ENCODE measurements at regions of chr5 and their contacts with region 1.

Region 1: DNA sequence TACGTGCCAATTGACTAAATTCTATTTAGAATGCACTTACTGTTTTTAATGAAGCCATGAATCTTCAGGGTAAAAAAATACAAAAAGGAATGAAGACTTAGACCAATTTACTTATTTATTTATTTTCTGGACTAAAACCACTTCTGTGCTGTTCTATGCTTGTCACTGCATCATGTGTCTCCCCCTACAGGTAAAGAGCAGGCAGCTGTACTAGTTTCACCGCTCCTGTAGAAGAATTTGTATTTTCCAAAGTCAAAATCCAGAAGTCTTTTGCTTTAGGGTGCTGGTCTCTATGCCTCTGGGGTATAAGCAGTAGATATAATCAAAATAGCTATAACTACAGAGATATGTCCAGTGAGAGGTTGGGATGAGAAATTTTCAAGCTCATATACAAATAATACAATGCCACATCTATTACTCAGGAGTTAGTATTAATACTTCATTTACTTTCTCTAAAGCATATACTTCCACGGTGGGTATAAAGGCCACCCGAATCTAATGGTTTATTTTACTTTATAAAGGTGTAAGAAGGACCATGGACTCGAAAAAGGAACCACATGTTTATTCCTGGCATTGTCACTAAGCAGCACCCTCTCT is 591.5 kb downstream of the RAB3C start:
- DNase-seq: peak; percentile 68 to 79 (median 77)
- H3K4me3 ChIP-seq: no peak overlapping the region
- H3K27ac ChIP-seq: no peak overlapping the region
- H3K4me1 ChIP-seq: peaks cover 0 to 16% (median 6%) of the 10 kb centered on the region in 4 experiments
- H3K27me3 ChIP-seq: no peaks in the 10 kb centered on the region

Region 2: DNA sequence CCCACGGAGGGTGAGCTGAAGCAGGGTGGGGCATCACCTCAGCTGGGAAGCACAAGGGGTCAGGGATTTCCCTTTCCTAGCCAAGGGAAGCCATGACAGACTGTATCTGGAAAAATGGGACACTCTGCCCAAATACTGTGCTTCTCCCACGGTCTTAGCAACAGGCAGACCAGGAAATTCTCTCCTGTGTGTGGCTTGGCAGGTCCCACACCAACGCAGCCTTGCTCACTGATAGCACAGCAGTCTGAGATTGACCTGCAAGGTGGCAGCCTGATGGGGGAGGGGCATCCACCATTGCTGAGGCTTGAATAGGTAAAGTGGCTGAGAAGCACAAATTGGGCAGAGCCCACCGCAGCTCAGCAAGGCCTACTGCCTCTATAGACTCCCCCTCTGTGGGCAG is 568.3 kb before region 1 on chr5:
- CTCF ChIA-PET with region 1: no interaction called
- POLR2A ChIA-PET with region 1: no interaction called
- DNase-seq: no peak
- H3K4me3 ChIP-seq: no peak overlapping the region
- H3K27ac ChIP-seq: no peak overlapping the region
- H3K4me1 ChIP-seq: no peaks in the 10 kb centered on the region
- H3K27me3 ChIP-seq: no peaks in the 10 kb centered on the region

Region 3: GRCh38 chr5:59039296-59040023 is 134.9 kb before region 1 on chr5:
- CTCF ChIA-PET with region 1: interaction called, 55 read pairs
- POLR2A ChIA-PET with region 1: no interaction called
- DNase-seq: peak; percentile 93 to 97 (median 96)
- H3K4me3 ChIP-seq: peak overlapping the region; percentile 80 to 98 (median 94)
- H3K27ac ChIP-seq: peak overlapping the region; percentile 85 to 90
- H3K4me1 ChIP-seq: peaks cover 35 to 70% (median 52%) of the 10 kb centered on the region in 4 experiments
- H3K27me3 ChIP-seq: no peaks in the 10 kb centered on the region

Region 4: DNA sequence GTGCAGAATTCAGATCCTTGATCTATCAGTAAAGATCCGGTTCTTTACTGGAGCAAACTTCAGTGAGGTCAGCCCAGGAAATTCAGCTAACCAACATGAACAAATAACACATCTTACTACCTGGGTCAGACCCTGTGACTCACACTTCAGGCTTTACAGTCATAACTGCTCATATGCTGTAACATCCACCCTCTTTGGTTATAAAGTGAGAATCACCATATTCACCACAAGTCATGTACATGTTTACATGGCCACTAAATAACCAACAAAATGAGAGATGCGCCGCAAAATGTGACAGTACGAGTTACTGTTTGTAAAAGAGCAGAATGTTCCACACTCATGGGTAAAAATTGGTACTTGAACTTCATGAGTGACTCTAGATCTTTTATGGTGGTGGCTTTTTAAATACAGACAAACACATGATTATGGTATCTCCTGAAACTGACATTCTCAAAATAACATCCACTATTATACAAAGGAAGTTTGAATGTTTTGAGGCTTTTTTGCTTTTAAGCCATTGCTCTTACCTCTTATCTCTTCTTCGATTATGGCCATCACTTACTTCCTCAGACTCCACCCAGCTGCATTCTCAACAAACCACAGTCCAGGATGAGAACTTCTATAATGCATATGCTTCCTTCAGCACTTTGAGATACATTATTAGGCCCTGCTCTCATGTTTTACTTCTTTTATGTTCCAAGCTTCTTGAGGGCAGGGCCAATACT is 74.9 kb before region 1 on chr5:
- CTCF ChIA-PET with region 1: no interaction called
- POLR2A ChIA-PET with region 1: no interaction called
- DNase-seq: peak in 2 of 3 donors; percentile 14 to 18
- H3K4me3 ChIP-seq: no peak overlapping the region
- H3K27ac ChIP-seq: no peak overlapping the region
- H3K4me1 ChIP-seq: peaks cover 0 to 6% (median 5%) of the 10 kb centered on the region in 4 experiments
- H3K27me3 ChIP-seq: no peaks in the 10 kb centered on the region

Region 5: GRCh38 chr5:59126708-59127573 is 47.4 kb before region 1 on chr5:
- CTCF ChIA-PET with region 1: interaction called, 11 read pairs
- POLR2A ChIA-PET with region 1: no interaction called
- DNase-seq: no peak
- H3K4me3 ChIP-seq: peak overlapping the region in 6 of 7 experiments; percentile 29 to 81 (median 62)
- H3K27ac ChIP-seq: peak overlapping the region; percentile 65 to 81
- H3K4me1 ChIP-seq: peaks cover 14 to 51% (median 16%) of the 10 kb centered on the region in 4 experiments
- H3K27me3 ChIP-seq: no peaks in the 10 kb centered on the region

Region 6: DNA sequence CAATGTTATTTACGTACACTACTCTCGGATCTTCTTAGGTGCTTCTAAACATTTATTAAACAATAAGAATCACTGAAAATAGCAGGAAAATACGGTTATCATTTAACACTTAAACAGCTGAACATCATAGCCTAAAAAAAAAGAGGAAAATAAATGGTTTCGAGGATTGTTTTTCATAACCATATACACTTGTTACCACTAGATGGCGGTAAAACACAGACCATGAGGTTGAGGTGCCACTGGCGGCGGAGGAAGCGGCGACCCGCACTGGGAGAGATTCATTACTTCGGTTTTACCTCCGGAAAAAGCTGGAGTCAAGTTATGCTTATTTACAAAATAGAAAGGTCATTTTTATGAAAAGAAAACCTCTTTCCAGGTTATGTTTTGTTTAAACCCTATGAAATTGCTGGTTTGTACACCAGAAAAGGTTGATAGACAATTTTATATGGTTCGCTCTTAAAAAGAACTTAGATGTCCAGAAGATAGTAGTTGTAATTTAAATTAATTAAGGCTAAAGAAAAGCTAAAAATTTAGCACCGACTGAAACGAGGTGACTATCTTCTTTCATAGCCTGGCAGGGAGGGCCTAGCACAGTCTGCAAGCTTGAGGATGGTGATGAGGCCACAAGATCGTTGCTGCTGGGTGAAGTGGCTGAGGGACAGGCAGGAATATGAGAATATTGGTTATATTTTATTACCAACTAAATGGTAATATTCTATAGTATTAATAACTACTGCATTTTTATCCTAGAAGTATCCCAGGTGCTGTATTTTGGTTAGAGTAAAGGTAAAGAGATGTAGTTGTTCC is 14.3 kb after region 1 on chr5:
- CTCF ChIA-PET with region 1: interaction called, 16 read pairs
- POLR2A ChIA-PET with region 1: no interaction called
- DNase-seq: peak; percentile 69 to 86 (median 84)
- H3K4me3 ChIP-seq: peak overlapping the region in 5 of 7 experiments; percentile 30 to 70 (median 52)
- H3K27ac ChIP-seq: no peak overlapping the region
- H3K4me1 ChIP-seq: peaks cover 0 to 5% (median 2%) of the 10 kb centered on the region in 4 experiments
- H3K27me3 ChIP-seq: no peaks in the 10 kb centered on the region

Region 7: DNA sequence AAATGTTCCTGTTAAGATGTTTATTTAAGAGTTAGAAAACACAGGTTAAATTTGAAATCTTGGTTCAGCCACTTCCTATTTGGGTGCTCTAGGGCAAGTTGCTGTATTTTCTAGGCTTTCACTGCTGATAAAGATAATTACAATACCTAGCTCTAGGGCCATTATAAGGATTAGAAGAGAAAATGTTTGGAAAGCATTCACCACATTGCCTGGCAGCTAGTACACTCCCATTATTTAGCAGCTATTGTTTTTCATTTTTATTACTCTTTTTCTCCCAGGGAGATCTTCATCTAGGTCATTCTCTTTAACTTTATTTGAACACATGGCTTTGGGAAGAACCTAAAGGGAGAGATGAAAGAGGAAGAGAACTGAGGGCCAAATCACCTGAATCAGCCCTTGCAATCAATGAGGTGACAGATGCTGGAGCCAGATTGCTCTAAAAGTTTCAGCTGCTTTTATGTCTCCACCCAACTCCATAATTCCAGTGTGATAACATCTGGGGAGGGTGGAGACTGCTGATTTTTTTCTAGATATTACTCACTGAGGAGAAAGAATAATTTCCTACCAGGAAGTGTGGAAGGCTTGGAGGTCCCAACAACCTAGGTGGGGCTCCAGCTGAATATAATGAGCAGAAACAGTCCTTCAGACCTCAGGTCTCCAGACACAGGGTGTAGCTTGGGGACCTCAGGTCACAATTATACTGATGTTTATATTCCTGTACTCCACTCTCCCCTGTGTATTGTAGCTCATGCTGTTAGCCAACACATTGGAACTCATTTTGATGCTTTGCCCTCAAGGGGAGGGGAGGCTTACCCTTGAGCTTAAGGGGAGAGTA is 48.6 kb after region 1 on chr5:
- CTCF ChIA-PET with region 1: no interaction called
- POLR2A ChIA-PET with region 1: no interaction called
- DNase-seq: peak in 2 of 3 donors; percentile 3 to 8
- H3K4me3 ChIP-seq: no peak overlapping the region
- H3K27ac ChIP-seq: no peak overlapping the region
- H3K4me1 ChIP-seq: no peaks in the 10 kb centered on the region
- H3K27me3 ChIP-seq: no peaks in the 10 kb centered on the region

Region 8: DNA sequence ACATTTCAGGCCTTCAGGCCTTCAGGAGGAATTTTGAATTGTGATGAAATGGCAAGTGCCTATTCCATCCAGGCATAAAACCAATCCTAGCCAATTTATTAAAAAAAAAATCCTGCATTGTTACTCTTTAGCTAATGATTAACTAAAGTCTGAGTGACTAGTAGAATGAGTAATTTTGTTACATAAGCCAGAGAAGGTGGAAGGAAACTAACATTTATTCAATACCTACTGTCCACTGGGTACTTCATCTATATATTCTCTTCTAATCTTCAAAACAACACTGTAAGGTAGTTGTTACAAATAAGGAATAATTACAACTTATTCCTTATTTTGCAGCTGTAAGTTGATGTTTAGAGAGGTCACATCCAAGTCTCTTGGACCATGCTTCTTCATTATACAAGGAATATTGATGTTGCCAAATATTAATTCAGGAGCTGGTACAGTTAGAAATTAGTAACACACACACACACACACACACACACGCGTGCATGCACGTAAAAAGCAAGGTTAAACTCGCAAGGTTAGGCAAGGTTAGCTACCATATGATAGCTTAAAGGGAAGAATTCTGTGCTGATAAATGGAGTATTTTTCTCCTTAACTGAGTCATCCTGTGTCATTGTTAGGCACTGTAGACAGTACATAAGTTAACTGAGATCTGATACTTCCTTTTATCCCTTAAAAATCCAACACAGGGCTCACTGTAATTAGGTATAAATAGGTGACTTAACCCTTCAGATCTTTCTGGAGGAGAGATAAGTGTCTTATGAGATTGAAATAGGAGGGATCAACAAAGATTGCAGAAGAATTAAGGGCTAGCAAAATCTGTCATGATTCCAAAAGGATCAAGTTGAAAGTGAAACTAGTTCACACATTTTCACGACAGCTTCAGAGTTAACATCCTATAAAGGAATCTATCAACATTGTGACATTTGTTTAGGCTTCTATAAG is 122.2 kb after region 1 on chr5:
- CTCF ChIA-PET with region 1: no interaction called
- POLR2A ChIA-PET with region 1: no interaction called
- DNase-seq: peak in 2 of 3 donors; percentile 61 to 63
- H3K4me3 ChIP-seq: peak overlapping the region in 6 of 7 experiments; percentile 24 to 67 (median 44)
- H3K27ac ChIP-seq: peak overlapping the region; percentile 27 to 63
- H3K4me1 ChIP-seq: peaks cover 2 to 14% (median 3%) of the 10 kb centered on the region in 4 experiments
- H3K27me3 ChIP-seq: no peaks in the 10 kb centered on the region